CD4-positive, alpha-beta T cell (primary cell): ENCODE measurements at regions of chr12 and their contacts with region 1.

Region 1: DNA sequence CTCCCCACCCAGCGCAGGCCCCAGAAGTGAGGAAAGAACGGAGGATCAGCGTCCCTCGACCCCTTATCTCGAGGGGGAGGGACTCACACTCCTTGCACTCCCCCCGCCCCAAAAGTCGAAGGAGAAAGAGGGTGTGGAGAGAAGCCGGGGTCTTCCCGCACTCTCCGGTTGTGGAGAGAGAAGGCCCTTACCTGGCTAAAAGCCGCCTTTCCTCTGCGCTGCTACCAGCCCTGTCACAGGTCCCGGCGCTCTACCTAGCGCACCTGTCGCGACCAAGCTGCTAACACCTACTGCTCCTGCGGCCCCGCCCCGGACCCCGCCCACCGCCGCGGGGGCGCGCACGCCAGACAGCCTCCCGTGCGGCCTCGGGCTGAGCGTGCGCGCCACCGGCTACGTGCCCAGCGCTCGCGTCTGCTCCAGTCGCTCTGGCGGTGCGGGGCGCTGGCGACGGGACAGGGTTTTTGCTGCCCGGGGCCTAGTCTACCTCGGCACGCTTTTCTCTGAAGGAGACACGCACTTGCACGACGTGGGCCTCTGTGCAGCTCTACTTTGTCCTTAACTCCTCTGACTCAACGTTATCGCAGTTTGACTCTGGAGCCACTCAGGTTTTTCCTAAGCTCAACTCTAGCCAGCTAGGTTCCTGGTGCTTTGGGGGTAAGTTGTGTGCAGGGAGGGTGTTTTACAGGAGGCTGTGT is at the start of gene LIMA1:
- DNase-seq: peak; percentile 86 to 97 (median 92)
- ATAC-seq: peak; percentile 95
- H3K4me3 ChIP-seq: peak within 1 kb of the TSS; percentile 78
- H3K4me3 Mint-ChIP-seq: peak within 1 kb of the TSS; percentile 94
- H3K27ac ChIP-seq: peak within 1 kb of the TSS; percentile 19 to 53
- H3K27ac Mint-ChIP-seq: peak within 1 kb of the TSS; percentile 86
- H3K4me1 ChIP-seq: peaks cover 22% of the 10 kb centered on the region
- H3K4me1 Mint-ChIP-seq: peaks cover 26% of the 10 kb centered on the region
- H3K27me3 ChIP-seq: no peaks in the 10 kb centered on the region
- H3K27me3 Mint-ChIP-seq: no peaks in the 10 kb centered on the region
- CTCF ChIP-seq: no peak
- total RNA-seq, gene LIMA1: 4.6 to 5.1 TPM

Region 2: GRCh38 chr12:50084775-50085614 is 198.4 kb before region 1 on chr12 and contains the start of gene SMARCD1:
- CTCF ChIA-PET with region 1: no interaction called
- POLR2A ChIA-PET with region 1: interaction called, 13 read pairs
- intact Hi-C with region 1: loop called in 1 of 2 experiments (anchors 10 kb)
- DNase-seq: peak; percentile 70 to 93 (median 84)
- ATAC-seq: peak; percentile 83
- H3K4me3 ChIP-seq: peak within 1 kb of the TSS; percentile 95
- H3K4me3 Mint-ChIP-seq: peak within 1 kb of the TSS; percentile 96
- H3K27ac ChIP-seq: peak within 1 kb of the TSS; percentile 82 to 95
- H3K27ac Mint-ChIP-seq: peak within 1 kb of the TSS; percentile 99
- H3K4me1 ChIP-seq: peaks cover 21% of the 10 kb centered on the region
- H3K4me1 Mint-ChIP-seq: peaks cover 43% of the 10 kb centered on the region
- H3K27me3 ChIP-seq: no peaks in the 10 kb centered on the region
- H3K27me3 Mint-ChIP-seq: no peaks in the 10 kb centered on the region
- CTCF ChIP-seq: peak; percentile 45
- total RNA-seq, gene SMARCD1: 78.9 to 80.0 TPM

Region 3: GRCh38 chr12:50222275-50222795 is 61.0 kb before region 1 on chr12:
- CTCF ChIA-PET with region 1: no interaction called
- POLR2A ChIA-PET with region 1: interaction called, 21 read pairs
- intact Hi-C with region 1: loop called (anchors 5 kb)
- DNase-seq: peak in 4 of 14 experiments; percentile 30 to 64 (median 62)
- ATAC-seq: peak; percentile 49
- H3K4me3 ChIP-seq: peak overlapping the region; percentile 83
- H3K4me3 Mint-ChIP-seq: no peak overlapping the region
- H3K27ac ChIP-seq: peak overlapping the region; percentile 51 to 82
- H3K27ac Mint-ChIP-seq: no peak overlapping the region
- H3K4me1 ChIP-seq: peaks cover 53% of the 10 kb centered on the region
- H3K4me1 Mint-ChIP-seq: peaks cover 25% of the 10 kb centered on the region
- H3K27me3 ChIP-seq: no peaks in the 10 kb centered on the region
- H3K27me3 Mint-ChIP-seq: no peaks in the 10 kb centered on the region
- CTCF ChIP-seq: no peak

Region 4: GRCh38 chr12:50400598-50401364 is 117.4 kb after region 1 on chr12 and contains the start of gene LARP4:
- CTCF ChIA-PET with region 1: no interaction called
- POLR2A ChIA-PET with region 1: interaction called, 3 read pairs
- intact Hi-C with region 1: loop called in 1 of 2 experiments (anchors 2 kb)
- DNase-seq: peak; percentile 79 to 94 (median 85)
- ATAC-seq: peak; percentile 94
- H3K4me3 ChIP-seq: peak within 1 kb of the TSS; percentile 91
- H3K4me3 Mint-ChIP-seq: peak within 1 kb of the TSS; percentile 94
- H3K27ac ChIP-seq: peak within 1 kb of the TSS; percentile 65 to 70
- H3K27ac Mint-ChIP-seq: peak within 1 kb of the TSS; percentile 80
- H3K4me1 ChIP-seq: peaks cover 15% of the 10 kb centered on the region
- H3K4me1 Mint-ChIP-seq: peaks cover 30% of the 10 kb centered on the region
- H3K27me3 ChIP-seq: no peaks in the 10 kb centered on the region
- H3K27me3 Mint-ChIP-seq: peaks cover 11% of the 10 kb centered on the region
- CTCF ChIP-seq: peak; percentile 10
- total RNA-seq, gene LARP4: 17.6 to 18.1 TPM

Region 5: GRCh38 chr12:50467439-50467838 is 184.1 kb after region 1 on chr12:
- CTCF ChIA-PET with region 1: no interaction called
- POLR2A ChIA-PET with region 1: no interaction called
- intact Hi-C with region 1: no loop called
- DNase-seq: no peak
- ATAC-seq: no peak
- H3K4me3 ChIP-seq: no peak overlapping the region
- H3K4me3 Mint-ChIP-seq: no peak overlapping the region
- H3K27ac ChIP-seq: no peak overlapping the region
- H3K27ac Mint-ChIP-seq: no peak overlapping the region
- H3K4me1 ChIP-seq: no peaks in the 10 kb centered on the region
- H3K4me1 Mint-ChIP-seq: no peaks in the 10 kb centered on the region
- H3K27me3 ChIP-seq: no peaks in the 10 kb centered on the region
- H3K27me3 Mint-ChIP-seq: no peaks in the 10 kb centered on the region
- CTCF ChIP-seq: no peak